ENCODE measurements at regions of chr13 and their contacts with region 1.

Region 1: GRCh38 chr13:91375116-91375729 is 23.2 kb upstream of the GPC5 start:
- DNase-seq: no peak
- H3K4me3 Mint-ChIP-seq: no peak overlapping the region
- H3K27ac Mint-ChIP-seq: no peak overlapping the region
- H3K4me1 Mint-ChIP-seq: no peaks in the 10 kb centered on the region
- H3K27me3 Mint-ChIP-seq: no peaks in the 10 kb centered on the region
- CTCF ChIP-seq: no peak

Region 2: DNA sequence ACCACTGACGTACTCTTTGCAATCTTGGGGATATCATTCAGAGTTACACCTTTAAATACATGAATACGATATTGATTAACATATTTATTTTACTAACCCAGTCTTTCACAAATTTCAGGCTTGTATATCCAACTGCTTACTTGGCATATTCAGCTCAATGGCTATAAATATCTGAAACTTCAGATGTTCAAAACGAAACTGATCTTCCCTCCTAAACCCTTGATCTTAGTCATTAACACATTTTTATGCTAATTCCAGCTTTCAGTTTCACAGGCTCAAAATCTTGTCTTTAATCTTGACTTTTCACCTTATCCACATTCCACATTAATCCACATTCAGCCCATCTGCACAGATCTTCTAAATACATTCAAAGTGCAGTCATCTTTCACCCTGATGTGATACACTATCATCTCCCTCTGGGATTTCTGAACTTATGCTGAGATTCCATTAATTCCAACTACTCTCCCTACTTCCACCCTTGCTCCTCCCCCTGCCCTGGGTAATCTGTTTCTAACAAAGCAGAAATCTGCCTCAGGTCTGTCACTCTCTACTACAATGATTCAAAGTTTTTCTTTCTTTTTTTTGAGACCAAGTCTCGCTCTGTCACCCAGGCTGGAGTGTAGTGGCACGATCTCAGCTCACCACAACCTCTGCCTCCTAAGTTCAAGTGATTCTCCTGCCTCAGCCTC is 410.4 kb after region 1 on chr13:
- CTCF ChIA-PET with region 1: no interaction called
- intact Hi-C with region 1: loop called (anchors 2 kb)
- DNase-seq: no peak
- H3K4me3 Mint-ChIP-seq: no peak overlapping the region
- H3K27ac Mint-ChIP-seq: no peak overlapping the region
- H3K4me1 Mint-ChIP-seq: no peaks in the 10 kb centered on the region
- H3K27me3 Mint-ChIP-seq: no peaks in the 10 kb centered on the region
- CTCF ChIP-seq: no peak

Measured in Calu3 (cell line).